GM10248 (cell line): ENCODE measurements at regions of chr22 and their contacts with region 1.

Region 1: DNA sequence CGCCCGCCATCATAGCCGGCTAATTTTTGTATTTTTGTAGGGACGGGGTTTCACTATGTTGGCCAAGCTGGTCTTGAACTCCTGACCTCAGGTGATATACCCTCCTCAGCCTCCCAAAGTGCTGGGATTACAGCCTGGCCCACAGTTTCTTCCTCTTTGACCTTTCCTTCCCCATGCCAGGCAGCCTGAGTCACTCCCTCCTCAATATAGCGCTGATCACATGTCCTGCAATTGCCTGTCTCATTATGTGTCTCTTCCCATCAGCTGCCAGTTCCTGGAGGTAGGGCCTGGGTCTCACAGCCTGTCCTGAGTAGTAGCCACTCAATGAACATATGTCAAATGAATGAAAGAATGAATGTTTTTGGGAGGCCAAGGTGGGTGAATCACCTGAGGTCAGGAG is 43.0 kb upstream of the CCDC134 start:
- DNase-seq: no peak
- CTCF ChIP-seq: no peak

Region 2: DNA sequence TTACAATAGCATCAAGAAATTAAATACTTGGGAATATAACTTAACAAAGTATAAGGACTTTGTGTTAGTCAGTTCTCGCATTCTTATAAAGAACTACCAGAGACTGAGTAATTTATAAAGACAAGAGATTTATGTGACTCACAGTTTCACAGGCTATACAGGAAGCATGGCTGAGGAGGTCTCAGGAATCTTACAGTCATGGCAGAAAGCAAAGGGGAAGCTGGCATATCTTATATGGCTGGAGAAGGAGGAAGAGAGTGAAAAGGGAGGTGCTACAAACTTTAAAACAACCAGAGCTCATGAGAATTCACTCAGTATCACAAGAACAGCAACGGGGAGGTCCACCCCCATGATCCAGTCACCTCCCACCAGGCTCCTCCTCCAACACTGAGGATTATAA is 10.9 kb after region 1 on chr22:
- CTCF ChIA-PET with region 1: interaction called, 12 read pairs
- POLR2A ChIA-PET with region 1: no interaction called
- DNase-seq: no peak
- CTCF ChIP-seq: no peak